Activated CD4-positive, alpha-beta memory T cell treated with anti-CD3 and anti-CD28 coated beads for 36 hours (primary cell): ENCODE measurements at regions of chr19 and their contacts with region 1.

Region 1: DNA sequence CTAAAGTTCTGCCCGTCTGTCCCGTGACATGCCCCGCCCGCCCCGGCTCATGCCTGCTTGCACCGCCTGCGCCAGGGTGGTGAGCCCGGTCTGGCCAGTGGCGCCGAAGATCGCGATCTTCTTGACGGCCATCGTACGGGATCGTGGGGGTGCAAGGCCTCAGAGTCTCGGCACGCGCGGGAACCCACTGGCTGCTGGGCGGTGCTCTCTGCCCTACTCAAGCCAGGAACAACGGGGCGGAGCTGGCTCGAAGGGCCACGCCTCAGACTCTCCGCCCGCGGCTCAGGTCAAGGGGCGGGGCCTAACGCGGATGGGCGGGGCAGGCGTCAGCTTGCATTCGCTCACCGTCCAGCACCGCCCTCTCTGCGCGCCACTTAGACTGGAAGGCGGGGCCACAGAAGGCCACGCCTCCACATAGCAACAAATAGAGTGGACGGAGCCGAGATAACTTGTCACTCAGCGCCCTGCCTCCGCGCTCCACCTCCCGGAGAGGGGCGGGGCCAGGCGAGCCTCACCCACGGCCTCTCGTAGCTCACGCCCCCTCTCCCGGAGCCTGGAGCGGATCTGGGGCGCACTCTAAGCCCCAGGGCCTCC is at the start of gene BLVRB:
- DNase-seq: peak; percentile 100
- H3K4me3 Mint-ChIP-seq: peak within 1 kb of the TSS; percentile 76
- H3K27ac Mint-ChIP-seq: peak within 1 kb of the TSS; percentile 68
- H3K4me1 Mint-ChIP-seq: peaks cover 31% of the 10 kb centered on the region
- H3K27me3 Mint-ChIP-seq: peaks cover 10% of the 10 kb centered on the region
- total RNA-seq, gene BLVRB: 34.6 to 37.6 TPM

Region 2: DNA sequence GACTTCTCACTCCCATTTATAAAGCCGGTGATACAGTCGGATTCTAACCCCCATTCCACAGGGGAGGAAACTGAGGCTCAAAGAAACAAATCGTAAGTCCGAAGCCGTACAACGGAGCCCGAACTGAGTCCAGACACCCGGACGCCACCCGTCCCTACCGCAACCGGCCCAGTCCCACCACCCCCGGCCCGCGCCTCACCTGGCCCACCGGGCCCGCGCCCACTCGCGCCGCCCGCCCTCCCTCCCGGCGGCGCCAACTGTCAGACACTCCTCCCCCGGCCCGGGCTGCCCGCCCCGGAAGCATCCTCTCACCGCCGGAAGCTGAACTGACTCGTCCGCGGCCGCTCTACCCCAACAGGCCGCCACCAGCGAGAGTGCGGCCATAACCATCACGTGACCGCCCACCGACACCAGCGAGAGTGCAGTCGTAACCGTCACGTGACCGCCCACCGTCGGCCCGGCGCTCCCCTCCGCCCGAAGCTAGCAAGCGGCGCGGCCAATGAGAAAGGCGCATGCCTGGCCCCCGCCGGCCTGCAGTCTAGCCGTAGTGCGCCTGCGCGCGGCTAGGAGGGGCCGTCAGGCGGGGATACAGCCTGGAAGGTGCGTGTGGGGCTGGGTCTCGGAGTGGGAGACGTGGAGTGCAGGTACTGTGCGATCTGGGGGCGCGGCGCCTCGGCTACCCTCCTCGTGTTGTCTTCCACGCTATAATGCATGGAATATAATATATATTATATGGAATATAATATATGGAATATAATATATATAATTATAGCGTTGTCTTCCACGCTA is 117.3 kb before region 1 on chr19 and contains the starts of genes C19orf47 and PLD3:
- CTCF ChIA-PET with region 1: no interaction called
- POLR2A ChIA-PET with region 1: interaction called, 4 read pairs
- intact Hi-C with region 1: loop called (anchors 2 kb)
- DNase-seq: peak; percentile 99
- H3K4me3 Mint-ChIP-seq: peak within 1 kb of the TSS; percentile 83
- H3K27ac Mint-ChIP-seq: peak within 1 kb of the TSS; percentile 61
- H3K4me1 Mint-ChIP-seq: peaks cover 26% of the 10 kb centered on the region
- H3K27me3 Mint-ChIP-seq: no peaks in the 10 kb centered on the region
- total RNA-seq, gene C19orf47: 18.3 to 20.8 TPM
- total RNA-seq, gene PLD3: 70.9 to 73.4 TPM

Region 3: DNA sequence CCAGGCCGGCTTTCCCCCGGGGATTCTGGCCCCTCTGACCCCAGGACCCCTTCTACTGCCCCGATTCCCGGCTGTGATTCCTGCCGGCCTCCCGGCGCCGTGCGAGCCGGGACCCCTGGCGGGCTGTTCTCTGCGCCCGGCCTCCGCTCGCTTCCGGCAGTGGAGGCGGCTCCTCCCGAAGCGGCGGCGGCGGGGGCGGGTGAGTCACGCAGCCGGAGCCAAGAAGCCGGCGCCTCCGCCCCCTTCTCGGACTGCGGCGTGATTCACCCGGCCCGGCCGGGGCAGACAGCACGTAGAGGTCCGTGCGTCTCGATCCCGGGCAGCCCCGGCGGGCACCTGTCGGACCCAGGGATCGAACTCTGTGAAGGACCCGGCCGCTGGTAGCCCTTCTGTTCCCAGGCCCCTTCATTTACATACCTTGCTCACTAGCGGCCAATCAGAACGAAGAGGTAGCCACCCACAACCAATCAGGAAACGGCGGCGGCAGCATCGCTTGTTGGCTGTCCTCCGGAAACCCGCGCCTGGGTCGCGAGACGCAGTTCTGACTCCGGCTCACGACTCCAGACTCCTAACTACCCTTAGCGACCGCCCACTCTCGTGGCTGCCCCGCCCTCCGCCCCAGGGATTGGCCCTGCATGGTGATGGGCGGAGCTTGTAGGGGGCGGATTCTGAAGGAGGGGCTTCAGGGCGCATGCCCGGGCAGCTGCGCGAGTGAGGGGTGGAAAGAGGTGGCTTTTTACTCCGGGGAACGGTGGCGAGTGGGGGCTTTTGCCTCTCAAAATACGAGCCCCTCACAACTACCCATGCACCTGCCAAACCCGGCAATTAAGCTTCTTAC is 40.0 kb before region 1 on chr19 and contains the start of gene SERTAD1:
- CTCF ChIA-PET with region 1: interaction called, 28 read pairs
- POLR2A ChIA-PET with region 1: interaction called, 5 read pairs
- intact Hi-C with region 1: loop called (anchors 2 kb)
- DNase-seq: peak; percentile 100
- H3K4me3 Mint-ChIP-seq: peak within 1 kb of the TSS; percentile 81
- H3K27ac Mint-ChIP-seq: peak within 1 kb of the TSS; percentile 88
- H3K4me1 Mint-ChIP-seq: peaks cover 17% of the 10 kb centered on the region
- H3K27me3 Mint-ChIP-seq: no peaks in the 10 kb centered on the region
- total RNA-seq, gene SERTAD1: 11.5 to 12.6 TPM

Region 4: GRCh38 chr19:40453151-40453735 is 12.4 kb before region 1 on chr19:
- CTCF ChIA-PET with region 1: interaction called, 13 read pairs
- POLR2A ChIA-PET with region 1: no interaction called
- intact Hi-C with region 1: no loop called
- DNase-seq: no peak
- H3K4me3 Mint-ChIP-seq: no peak overlapping the region
- H3K27ac Mint-ChIP-seq: no peak overlapping the region
- H3K4me1 Mint-ChIP-seq: no peaks in the 10 kb centered on the region
- H3K27me3 Mint-ChIP-seq: no peaks in the 10 kb centered on the region

Region 5: GRCh38 chr19:40565355-40565754 is 99.7 kb after region 1 on chr19:
- CTCF ChIA-PET with region 1: no interaction called
- POLR2A ChIA-PET with region 1: no interaction called
- intact Hi-C with region 1: no loop called
- DNase-seq: no peak
- H3K4me3 Mint-ChIP-seq: no peak overlapping the region
- H3K27ac Mint-ChIP-seq: no peak overlapping the region
- H3K4me1 Mint-ChIP-seq: peaks cover 10% of the 10 kb centered on the region
- H3K27me3 Mint-ChIP-seq: peaks cover 34% of the 10 kb centered on the region

Region 6: GRCh38 chr19:40603389-40604135 is 137.9 kb after region 1 on chr19:
- CTCF ChIA-PET with region 1: interaction called, 14 read pairs
- POLR2A ChIA-PET with region 1: no interaction called
- intact Hi-C with region 1: loop called (anchors 2 kb)
- DNase-seq: peak; percentile 99
- H3K4me3 Mint-ChIP-seq: peak overlapping the region; percentile 81
- H3K27ac Mint-ChIP-seq: peak overlapping the region; percentile 87
- H3K4me1 Mint-ChIP-seq: peaks cover 67% of the 10 kb centered on the region
- H3K27me3 Mint-ChIP-seq: peaks cover 19% of the 10 kb centered on the region